Right lobe of liver (tissue), 6 donors: ENCODE measurements at regions of chr21 and their contacts with region 1.

Region 1: DNA sequence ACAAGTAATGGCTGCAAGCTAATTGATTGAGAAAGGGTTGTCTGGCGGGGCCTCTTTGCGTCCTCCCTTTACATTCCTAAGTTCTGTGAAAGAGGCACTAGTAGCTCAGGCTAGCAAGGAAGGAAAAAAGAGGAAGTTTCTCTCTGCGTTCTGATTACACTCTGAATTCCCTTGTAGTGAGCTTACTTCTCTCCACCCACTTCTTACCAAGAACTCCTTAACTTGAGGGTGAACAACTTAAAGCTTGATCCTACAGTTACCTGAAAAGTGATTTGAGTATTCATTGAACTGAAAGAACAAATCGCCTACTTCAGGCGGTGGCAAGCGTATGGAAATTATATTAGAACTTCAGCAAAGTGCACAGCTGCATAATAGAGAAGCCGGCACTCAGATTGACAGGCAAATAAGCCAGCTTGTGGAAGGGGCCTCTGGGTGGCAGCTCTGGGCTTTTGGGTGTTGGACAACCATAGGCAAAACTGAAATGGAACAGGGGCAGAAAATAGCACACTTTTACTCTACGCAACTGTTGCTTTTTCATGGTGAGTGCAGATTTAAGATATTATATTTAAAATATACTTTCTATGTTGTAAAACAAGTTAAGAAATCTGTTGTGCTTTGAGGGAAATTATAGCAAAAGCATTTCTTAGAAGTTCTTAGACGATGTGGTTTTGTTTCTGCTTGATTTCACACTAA is 464.5 kb downstream of the USP25 start:
- DNase-seq: peak; percentile 68 to 83 (median 81)
- ATAC-seq: peak; percentile 90 to 95 (median 92)
- H3K4me3 ChIP-seq: peak overlapping the region; percentile 8 to 54 (median 48)
- H3K27ac ChIP-seq: peak overlapping the region; percentile 39 to 85 (median 70)
- H3K4me1 ChIP-seq: no peaks in the 10 kb centered on the region
- H3K27me3 ChIP-seq: no peaks in the 10 kb centered on the region
- CTCF ChIP-seq: peak; percentile 31 to 51 (median 42)
- POLR2A ChIP-seq: peak; percentile 31

Region 2: GRCh38 chr21:16294128-16294527 is 99.9 kb after region 1 on chr21:
- intact Hi-C with region 1: no loop called
- DNase-seq: no peak
- ATAC-seq: peak in 2 of 4 donors; percentile 30 to 33
- H3K4me3 ChIP-seq: no peak overlapping the region
- H3K27ac ChIP-seq: no peak overlapping the region
- H3K4me1 ChIP-seq: no peaks in the 10 kb centered on the region
- H3K27me3 ChIP-seq: no peaks in the 10 kb centered on the region
- CTCF ChIP-seq: no peak
- POLR2A ChIP-seq: no peak

Region 3: DNA sequence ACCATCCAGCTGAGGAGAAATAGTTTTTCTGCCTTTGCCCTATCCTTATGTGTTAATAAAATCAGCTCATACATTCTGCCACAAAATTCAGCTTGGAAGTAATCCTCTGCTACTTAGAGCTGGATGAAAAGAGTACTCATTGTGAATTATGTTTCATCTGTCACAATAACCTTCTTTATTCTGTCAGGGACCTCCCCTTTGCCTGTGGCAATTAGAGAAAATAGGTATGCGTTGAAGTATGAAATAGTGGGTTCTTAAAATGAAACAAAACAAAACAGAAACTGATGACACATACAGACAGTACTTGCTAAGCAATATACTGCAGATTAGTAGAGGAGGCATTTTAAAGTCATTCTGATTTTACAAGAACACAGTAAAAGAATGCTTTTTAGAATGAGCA is 114.0 kb after region 1 on chr21:
- intact Hi-C with region 1: loop called (anchors 10 kb)
- DNase-seq: no peak
- ATAC-seq: peak; percentile 43 to 72 (median 61)
- H3K4me3 ChIP-seq: peak overlapping the region in 2 of 3 donors; percentile 25 to 35
- H3K27ac ChIP-seq: peak overlapping the region; percentile 46 to 80 (median 76)
- H3K4me1 ChIP-seq: peaks cover 0 to 16% (median 3%) of the 10 kb centered on the region in 4 donors
- H3K27me3 ChIP-seq: no peaks in the 10 kb centered on the region
- CTCF ChIP-seq: no peak
- POLR2A ChIP-seq: no peak

Region 4: DNA sequence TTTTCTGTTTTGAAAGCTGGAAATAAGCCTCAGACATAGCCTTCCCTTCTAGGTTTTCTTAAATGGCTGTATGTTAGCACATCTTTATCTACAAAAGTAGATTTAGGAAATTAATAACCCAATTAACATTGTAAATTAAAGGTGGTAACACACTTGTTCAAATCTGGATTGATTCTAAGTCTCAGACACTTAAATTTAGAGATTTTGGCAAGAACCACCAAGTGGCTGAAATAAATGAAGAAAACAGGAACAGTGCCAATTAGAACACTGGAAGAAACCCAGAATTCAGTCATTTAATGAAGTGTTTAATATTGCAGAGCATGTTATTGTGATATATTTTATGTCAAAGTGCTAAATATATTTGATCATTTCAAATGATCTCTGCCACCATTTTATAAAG is 163.8 kb after region 1 on chr21:
- intact Hi-C with region 1: no loop called
- DNase-seq: no peak
- ATAC-seq: no peak
- H3K4me3 ChIP-seq: no peak overlapping the region
- H3K27ac ChIP-seq: no peak overlapping the region
- H3K4me1 ChIP-seq: no peaks in the 10 kb centered on the region
- H3K27me3 ChIP-seq: no peaks in the 10 kb centered on the region
- CTCF ChIP-seq: no peak
- POLR2A ChIP-seq: no peak

Region 5: GRCh38 chr21:16900685-16901084 is 706.4 kb after region 1 on chr21:
- intact Hi-C with region 1: no loop called
- DNase-seq: no peak
- ATAC-seq: no peak
- H3K4me3 ChIP-seq: no peak overlapping the region
- H3K27ac ChIP-seq: no peak overlapping the region
- H3K4me1 ChIP-seq: no peaks in the 10 kb centered on the region
- H3K27me3 ChIP-seq: no peaks in the 10 kb centered on the region
- CTCF ChIP-seq: no peak
- POLR2A ChIP-seq: no peak